ENCODE measurements at regions of chr4 and their contacts with region 1.

Region 1: GRCh38 chr4:23333946-23334878 is 555.6 kb downstream of the PPARGC1A start:
- DNase-seq: peak; percentile 87
- H3K4me3 Mint-ChIP-seq: peak overlapping the region; percentile 1
- H3K27ac Mint-ChIP-seq: peak overlapping the region; percentile 89
- H3K4me1 Mint-ChIP-seq: peaks cover 26% of the 10 kb centered on the region
- H3K27me3 Mint-ChIP-seq: peaks cover 2% of the 10 kb centered on the region

Region 2: DNA sequence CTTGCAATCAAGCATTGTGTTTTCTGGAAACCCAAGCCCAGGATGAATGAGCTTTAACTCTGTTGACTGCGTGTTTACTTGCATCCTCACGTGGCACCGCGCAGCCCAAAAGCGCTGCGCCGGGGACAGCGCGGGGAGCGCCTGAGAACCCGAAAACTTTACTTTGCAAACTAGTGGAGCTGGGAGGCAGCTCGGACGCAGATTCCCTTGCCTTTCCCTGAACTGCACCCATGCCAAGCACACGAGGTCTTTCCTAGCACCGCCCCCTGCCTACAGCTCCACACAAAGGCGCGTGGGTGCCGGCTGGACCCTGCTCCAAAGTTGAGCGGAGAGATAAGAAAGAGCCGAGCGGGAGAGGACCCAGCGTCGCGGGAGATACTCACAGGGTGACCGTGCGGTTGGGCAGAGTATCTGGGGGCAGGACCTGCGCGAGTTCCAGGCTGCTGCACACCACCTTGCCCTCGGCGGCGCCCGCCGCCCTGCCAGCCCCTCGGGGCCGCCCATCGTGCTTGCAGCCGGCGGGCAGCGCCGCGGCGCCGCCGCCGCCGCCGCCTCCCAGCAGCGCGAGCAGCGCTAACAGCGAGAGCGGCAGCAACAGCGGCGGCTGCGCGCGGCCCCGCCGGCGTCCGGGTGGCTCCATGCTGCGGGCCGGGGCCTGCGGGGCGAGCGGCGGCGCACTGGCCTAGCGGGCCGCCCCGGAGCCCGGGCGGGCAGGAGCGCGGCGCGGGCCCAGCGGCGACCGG is 818.9 kb before region 1 on chr4:
- intact Hi-C with region 1: loop called (anchors 10 kb)
- DNase-seq: peak; percentile 83
- H3K4me3 Mint-ChIP-seq: peak overlapping the region; percentile 100
- H3K27ac Mint-ChIP-seq: peak overlapping the region; percentile 96
- H3K4me1 Mint-ChIP-seq: peaks cover 21% of the 10 kb centered on the region
- H3K27me3 Mint-ChIP-seq: peaks cover 7% of the 10 kb centered on the region

Region 3: DNA sequence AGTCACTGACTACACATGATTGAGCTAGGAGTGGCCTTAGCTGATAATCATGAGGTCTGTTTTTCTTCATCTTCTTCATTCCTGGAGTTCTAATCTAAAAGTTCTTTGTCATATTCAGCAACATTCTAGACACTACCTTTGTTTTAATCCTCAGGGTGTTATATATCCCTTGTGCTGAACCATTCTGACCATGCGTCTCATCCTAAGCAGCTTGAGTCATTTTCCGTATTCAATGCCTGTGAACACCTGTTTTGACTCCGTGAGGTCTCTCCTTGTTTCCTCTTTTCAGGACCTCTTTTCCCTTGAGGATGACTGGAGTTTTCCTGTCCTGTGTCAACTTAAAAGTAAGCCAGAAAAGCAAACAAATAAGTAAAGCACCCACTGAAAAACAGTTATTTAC is 43.6 kb before region 1 on chr4:
- intact Hi-C with region 1: loop called (anchors 1 kb)
- DNase-seq: no peak
- H3K4me3 Mint-ChIP-seq: no peak overlapping the region
- H3K27ac Mint-ChIP-seq: no peak overlapping the region
- H3K4me1 Mint-ChIP-seq: peaks cover 3% of the 10 kb centered on the region
- H3K27me3 Mint-ChIP-seq: peaks cover 11% of the 10 kb centered on the region

Region 4: GRCh38 chr4:23305026-23305425 is 29.2 kb before region 1 on chr4:
- intact Hi-C with region 1: loop called (anchors 1 kb)
- DNase-seq: no peak
- H3K4me3 Mint-ChIP-seq: no peak overlapping the region
- H3K27ac Mint-ChIP-seq: no peak overlapping the region
- H3K4me1 Mint-ChIP-seq: peaks cover 8% of the 10 kb centered on the region
- H3K27me3 Mint-ChIP-seq: no peaks in the 10 kb centered on the region

Region 5: GRCh38 chr4:23844961-23845360 is 510.7 kb after region 1 on chr4:
- intact Hi-C with region 1: no loop called
- DNase-seq: no peak
- H3K4me3 Mint-ChIP-seq: no peak overlapping the region
- H3K27ac Mint-ChIP-seq: no peak overlapping the region
- H3K4me1 Mint-ChIP-seq: no peaks in the 10 kb centered on the region
- H3K27me3 Mint-ChIP-seq: no peaks in the 10 kb centered on the region

Region 6: DNA sequence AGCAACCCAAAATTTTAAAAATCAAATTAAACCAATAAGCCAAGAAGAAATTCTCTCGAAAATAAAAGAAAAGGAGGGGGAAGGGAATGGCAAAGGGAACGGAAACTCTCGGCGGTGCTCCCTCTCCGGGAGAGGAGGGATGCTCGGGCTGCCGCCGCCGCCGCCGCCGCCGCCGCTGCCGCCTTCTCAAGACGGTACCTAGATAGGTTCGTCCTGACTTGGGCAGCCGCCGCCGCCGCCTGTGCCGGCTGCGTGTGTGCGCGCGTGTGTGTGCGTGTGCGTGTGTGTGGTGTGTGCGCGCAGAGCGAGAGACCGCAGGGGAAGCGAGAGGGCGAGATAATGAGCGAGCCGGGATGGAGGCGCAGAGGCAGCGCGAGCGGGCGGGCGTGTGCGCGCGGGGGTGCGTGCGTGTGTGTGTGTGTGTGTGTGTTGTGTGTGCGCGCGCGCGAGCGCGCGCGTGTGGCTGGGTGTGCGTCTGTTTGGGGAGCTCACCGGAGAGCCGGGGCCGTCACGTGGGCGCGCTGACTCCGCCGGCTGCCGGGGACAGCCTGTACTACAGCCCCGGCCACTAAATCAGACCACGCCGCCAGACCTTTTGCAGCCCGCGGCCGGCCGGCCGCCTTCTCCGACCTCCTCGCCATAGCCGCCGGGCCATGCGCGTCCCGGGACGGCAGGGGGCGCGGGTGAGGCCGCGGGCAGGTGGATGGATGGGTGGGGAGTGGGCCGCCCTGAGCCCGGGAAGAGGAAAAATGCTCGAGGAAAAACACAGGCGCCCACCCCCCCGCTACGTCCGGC is 1138.5 kb after region 1 on chr4:
- intact Hi-C with region 1: loop called (anchors 5 kb)
- DNase-seq: peak; percentile 86
- H3K4me3 Mint-ChIP-seq: peak overlapping the region; percentile 90
- H3K27ac Mint-ChIP-seq: peak overlapping the region; percentile 79
- H3K4me1 Mint-ChIP-seq: peaks cover 28% of the 10 kb centered on the region
- H3K27me3 Mint-ChIP-seq: peaks cover 71% of the 10 kb centered on the region